ENCODE measurements at regions of chr6 and their contacts with region 1.

Region 1: GRCh38 chr6:34248727-34249551 is at the start of gene SMIM29:
- DNase-seq: peak; percentile 92 to 99 (median 98)

Region 2: DNA sequence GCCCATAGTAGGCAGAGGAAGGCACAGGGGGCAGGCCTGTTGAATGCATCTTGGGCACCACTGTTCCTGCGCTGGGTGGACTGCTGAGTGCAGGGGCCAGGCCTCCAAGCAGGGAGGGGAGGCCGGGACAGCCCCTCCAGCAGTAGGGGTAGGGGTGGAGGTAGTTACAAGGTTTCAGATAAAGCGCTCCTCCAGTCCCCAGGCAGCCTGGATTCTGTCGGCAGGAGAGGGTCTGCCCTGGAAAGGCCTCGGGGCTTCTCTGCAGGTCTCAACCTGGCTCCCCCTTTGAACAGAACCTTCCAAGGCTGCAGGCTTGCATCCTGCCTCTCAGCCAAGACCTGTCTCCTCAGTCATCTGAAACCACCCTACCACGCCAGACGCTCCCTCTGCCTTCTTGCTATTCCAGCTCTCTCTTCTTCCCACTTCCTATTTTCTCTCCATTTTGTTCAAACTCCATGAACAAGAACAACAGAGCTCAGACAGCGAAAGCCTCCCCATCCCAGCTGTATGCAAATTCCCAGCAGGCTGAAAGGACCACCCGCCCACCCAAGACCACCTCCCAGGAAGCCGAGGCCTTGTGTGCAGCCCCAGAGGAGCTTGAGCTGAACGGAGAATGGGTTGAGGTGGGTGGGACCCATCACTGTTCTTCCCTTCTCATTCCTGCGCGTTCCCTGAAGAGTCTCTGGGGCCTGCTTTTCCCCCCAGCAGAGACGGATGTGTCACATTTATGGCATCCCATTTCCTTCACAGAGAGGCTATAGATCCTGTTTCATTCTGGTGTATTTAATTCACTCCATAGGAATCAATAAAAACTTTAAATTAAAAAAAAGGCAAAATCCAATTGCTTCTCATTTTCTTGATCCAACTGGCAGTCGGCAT is 446.5 kb before region 1 on chr6:
- intact Hi-C with region 1: no loop called
- DNase-seq: no peak

Region 3: DNA sequence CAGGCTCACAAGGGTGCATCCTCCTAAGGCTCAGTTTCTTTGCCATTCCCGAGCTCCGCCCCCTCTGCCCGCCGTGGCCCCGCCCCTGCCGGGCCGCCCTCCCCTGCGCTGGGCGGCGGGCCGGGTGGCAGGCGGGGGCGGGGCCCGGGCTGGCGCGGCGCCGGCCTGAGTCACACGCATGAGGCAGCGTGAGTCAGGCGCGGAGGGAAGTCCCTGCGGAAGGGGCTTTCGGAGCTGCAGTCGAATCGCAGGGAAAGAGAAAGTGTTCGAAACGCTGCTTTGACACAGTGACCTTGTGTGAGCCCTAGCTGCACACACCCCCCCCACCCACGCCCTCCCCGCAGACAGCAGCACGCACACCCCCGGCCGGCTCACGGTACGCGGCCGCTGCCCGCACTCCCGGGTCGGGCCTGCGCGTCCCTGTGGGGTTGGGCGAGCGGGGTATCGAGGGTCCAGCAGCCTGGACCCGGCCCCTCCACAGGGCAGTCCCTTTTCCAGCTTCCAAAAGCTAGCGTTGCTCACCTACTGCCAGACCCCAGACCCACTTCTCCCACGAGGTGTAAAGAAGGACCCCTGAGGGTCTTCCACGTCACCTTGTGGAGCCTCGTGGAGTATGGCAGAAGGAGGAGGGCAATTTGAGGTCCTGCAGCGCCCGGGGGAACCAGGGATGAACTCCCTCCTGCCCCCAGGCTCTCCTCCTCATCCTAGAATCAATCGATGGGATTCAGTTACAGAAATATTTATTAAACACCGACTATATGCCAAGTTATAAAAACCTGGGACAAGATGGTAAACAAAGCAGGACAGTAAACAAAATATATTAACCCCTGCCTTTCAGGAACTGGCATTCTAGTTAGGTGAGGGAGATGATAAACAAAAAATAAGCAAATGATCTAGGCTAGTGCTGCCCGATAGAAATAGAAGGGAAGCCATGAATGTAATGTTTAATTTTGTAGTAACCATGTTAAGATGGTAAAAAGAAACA is 24.7 kb before region 1 on chr6:
- intact Hi-C with region 1: loop called (anchors 1 kb)
- DNase-seq: peak; percentile 73 to 97 (median 92)

Region 4: DNA sequence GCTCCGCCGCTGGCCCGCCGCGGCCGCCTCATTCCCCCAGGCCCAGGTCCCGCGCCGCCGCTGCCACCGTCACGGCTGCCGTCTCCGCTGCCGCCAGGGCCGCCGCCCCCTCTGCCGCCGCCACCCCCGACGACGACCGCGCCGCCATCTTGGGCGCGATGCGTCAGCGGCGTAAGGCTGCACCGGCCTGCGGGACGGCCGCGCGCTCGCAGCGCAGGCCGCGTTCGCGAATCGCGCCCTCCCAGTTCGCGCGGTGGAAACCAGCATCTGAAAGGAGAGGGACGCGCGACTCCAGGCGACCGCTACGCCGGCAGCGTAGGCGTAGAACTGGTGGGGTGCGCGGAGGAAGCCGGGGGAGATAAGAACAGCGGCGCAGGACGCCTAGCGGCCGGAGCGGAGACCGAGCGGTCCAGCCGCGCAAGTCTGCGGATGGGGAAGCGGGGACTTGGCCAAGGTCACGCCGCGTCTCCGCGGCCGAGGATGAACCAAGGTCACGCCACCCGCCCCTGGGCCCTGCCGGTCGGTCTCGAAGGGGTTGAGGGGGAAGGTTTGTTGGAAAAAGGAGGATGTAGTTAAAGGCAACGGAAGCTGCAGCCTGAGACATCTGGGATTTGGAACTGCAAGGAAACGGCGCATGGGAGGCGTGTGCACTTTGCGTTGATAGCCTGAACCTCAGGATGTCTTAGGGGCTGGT is 143.7 kb after region 1 on chr6 and contains the start of gene NUDT3:
- intact Hi-C with region 1: loop called (anchors 1 kb)
- DNase-seq: peak; percentile 85 to 98 (median 94)

Region 5: GRCh38 chr6:34414999-34415858 is 166.3 kb after region 1 on chr6:
- intact Hi-C with region 1: loop called (anchors 5 kb)
- DNase-seq: peak in 40 of 42 donors; percentile 15 to 88 (median 71)